ENCODE measurements at regions of chr1 and their contacts with region 1.

Region 1: GRCh38 chr1:226186124-226187018 is at the start of gene ACBD3:
- DNase-seq: peak; percentile 80 to 94
- ATAC-seq: peak; percentile 92 to 97 (median 97)
- H3K4me3 ChIP-seq: peak within 1 kb of the TSS; percentile 93
- H3K4me3 Mint-ChIP-seq: peak within 1 kb of the TSS; percentile 98
- H3K27ac ChIP-seq: peak within 1 kb of the TSS; percentile 93
- H3K27ac Mint-ChIP-seq: peak within 1 kb of the TSS; percentile 91 to 92
- H3K4me1 ChIP-seq: peaks cover 31% of the 10 kb centered on the region
- H3K4me1 Mint-ChIP-seq: peaks cover 41% of the 10 kb centered on the region in 2 donors
- H3K27me3 ChIP-seq: no peaks in the 10 kb centered on the region
- H3K27me3 Mint-ChIP-seq: no peaks in the 10 kb centered on the region
- CTCF ChIP-seq: no peak
- total RNA-seq, gene ACBD3: 26.9 to 33.3 (median 28.8) TPM

Region 2: GRCh38 chr1:225467193-225468020 is 719.0 kb before region 1 on chr1:
- intact Hi-C with region 1: loop called (anchors 10 kb)
- DNase-seq: peak; percentile 70 to 91
- ATAC-seq: peak; percentile 84 to 92 (median 88)
- H3K4me3 ChIP-seq: peak overlapping the region; percentile 55
- H3K4me3 Mint-ChIP-seq: peak overlapping the region; percentile 94
- H3K27ac ChIP-seq: peak overlapping the region; percentile 97
- H3K27ac Mint-ChIP-seq: peak overlapping the region; percentile 96
- H3K4me1 ChIP-seq: peaks cover 59% of the 10 kb centered on the region
- H3K4me1 Mint-ChIP-seq: peaks cover 68 to 80% of the 10 kb centered on the region in 2 donors
- H3K27me3 ChIP-seq: no peaks in the 10 kb centered on the region
- H3K27me3 Mint-ChIP-seq: no peaks in the 10 kb centered on the region
- CTCF ChIP-seq: no peak

Region 3: GRCh38 chr1:226308723-226309315 is 122.4 kb after region 1 on chr1 and contains the start of gene LIN9:
- intact Hi-C with region 1: loop called (anchors 2 kb)
- DNase-seq: peak; percentile 89 to 94
- ATAC-seq: peak; percentile 93 to 94 (median 93)
- H3K4me3 ChIP-seq: peak within 1 kb of the TSS; percentile 100
- H3K4me3 Mint-ChIP-seq: peak within 1 kb of the TSS; percentile 86
- H3K27ac ChIP-seq: peak within 1 kb of the TSS; percentile 61
- H3K27ac Mint-ChIP-seq: peak within 1 kb of the TSS in 1 of 2 donors; percentile 81
- H3K4me1 ChIP-seq: peaks cover 11% of the 10 kb centered on the region
- H3K4me1 Mint-ChIP-seq: peaks cover 6 to 7% of the 10 kb centered on the region in 2 donors
- H3K27me3 ChIP-seq: no peaks in the 10 kb centered on the region
- H3K27me3 Mint-ChIP-seq: peaks cover 9 to 10% of the 10 kb centered on the region in 2 donors
- CTCF ChIP-seq: no peak
- total RNA-seq, gene LIN9: 1.3 to 2.9 (median 2.4) TPM

Region 4: DNA sequence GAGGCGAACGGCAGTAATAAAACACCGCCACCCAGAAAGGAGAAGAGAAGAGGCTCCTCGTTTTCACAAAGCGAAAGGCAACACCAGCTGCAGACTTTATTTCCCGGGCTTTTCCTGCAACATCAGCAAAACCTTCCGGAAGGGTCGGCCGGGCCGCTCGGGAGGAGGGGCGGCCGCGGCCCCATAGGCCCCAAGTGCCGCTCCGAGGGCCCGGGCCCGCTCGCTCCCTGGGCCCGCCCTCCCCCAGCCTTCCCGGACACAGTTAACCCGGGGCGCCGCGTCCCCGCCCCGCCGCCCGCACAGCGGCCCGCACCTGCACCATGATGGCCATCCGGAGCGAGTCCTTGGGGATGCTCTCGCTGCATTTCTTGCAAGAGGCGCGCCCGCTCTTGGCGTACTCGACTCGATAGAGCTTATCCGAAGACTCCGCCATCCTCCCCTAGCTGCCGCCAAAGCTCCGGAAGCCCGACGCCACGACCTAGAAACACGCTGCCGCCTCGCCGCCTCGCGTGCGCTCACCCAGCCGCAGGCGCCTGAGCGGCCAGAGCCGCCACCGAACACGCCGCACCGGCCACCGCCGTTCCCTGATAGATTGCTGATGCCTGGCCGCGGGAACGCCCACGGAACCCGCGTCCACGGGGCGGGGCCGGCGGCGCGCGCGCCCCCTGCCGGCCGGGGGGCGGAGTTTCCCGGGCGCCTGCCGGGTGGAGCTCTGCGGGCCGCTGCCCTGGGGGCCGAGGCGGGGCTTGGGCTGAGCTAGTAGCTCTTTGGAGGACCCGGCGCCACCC is 221.3 kb after region 1 on chr1 and contains the start of gene PARP1:
- intact Hi-C with region 1: loop called (anchors 10 kb)
- DNase-seq: peak; percentile 88 to 93
- ATAC-seq: peak; percentile 90 to 95 (median 90)
- H3K4me3 ChIP-seq: peak within 1 kb of the TSS; percentile 80
- H3K4me3 Mint-ChIP-seq: peak within 1 kb of the TSS; percentile 97
- H3K27ac ChIP-seq: peak within 1 kb of the TSS; percentile 72
- H3K27ac Mint-ChIP-seq: peak within 1 kb of the TSS; percentile 92 to 95
- H3K4me1 ChIP-seq: peaks cover 48% of the 10 kb centered on the region
- H3K4me1 Mint-ChIP-seq: peaks cover 51 to 54% of the 10 kb centered on the region in 2 donors
- H3K27me3 ChIP-seq: no peaks in the 10 kb centered on the region
- H3K27me3 Mint-ChIP-seq: no peaks in the 10 kb centered on the region
- CTCF ChIP-seq: peak; percentile 79
- total RNA-seq, gene PARP1: 62.0 to 81.5 (median 77.0) TPM

Measured in natural killer cell (primary cell).